ENCODE measurements at regions of chr3 and their contacts with region 1.

Region 1: DNA sequence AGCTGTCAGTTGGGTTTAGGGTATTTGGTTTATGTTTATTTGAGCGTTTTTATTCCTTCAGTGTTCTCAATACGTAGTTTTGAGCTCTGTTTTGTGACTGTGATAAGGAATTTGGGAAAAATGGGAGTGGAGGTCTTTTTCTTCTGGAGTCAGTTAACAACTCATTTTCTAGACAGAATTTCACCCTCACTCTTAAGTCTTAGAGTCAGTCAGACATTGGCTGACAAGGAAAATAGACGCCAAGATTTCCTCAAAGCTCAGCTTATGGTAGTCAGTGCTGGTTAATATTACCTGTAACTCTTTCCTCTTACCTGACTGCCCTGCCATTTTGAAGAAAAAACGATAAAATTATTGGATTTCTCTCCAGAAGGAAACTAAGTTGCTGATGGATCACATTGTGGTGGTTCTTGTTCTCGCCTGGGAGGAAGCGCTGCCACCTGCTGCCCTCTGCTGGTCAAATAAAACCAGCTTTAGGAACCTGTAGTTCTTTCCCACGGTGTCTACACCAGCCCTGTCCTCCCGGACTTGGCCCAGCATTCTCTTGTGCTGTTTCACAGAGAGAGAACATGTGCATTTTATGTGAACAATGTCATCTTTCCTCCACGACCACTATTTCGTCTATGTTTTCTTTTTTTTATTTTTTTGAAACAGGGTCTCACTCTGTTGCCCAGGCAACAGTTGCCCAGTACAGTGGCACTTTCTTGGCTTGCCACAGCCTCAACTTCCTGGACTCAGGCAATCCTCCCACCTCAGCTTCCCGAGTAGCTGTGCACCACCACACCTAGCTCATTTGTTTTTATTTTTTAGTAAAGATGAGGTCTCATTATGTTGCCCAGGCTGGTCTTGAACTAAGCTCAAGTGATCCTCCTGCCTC is 41.4 kb upstream of the UMPS start:
- DNase-seq: peak; percentile 69 to 78 (median 76)
- ATAC-seq: peak; percentile 40 to 89 (median 80)
- H3K4me3 ChIP-seq: no peak overlapping the region
- H3K27ac ChIP-seq: no peak overlapping the region
- H3K4me1 ChIP-seq: peaks cover 0 to 22% (median 6%) of the 10 kb centered on the region in 12 donors
- H3K27me3 ChIP-seq: no peaks in the 10 kb centered on the region
- CTCF ChIP-seq: peak; percentile 80 to 95 (median 86)
- POLR2A ChIP-seq: no peak

Region 2: GRCh38 chr3:124504332-124505059 is 184.3 kb before region 1 on chr3:
- intact Hi-C with region 1: no loop called
- DNase-seq: peak in 4 of 5 donors; percentile 19 to 64 (median 39)
- ATAC-seq: peak; percentile 72 to 94 (median 88)
- H3K4me3 ChIP-seq: no peak overlapping the region
- H3K27ac ChIP-seq: peak overlapping the region in 2 of 12 donors; percentile 1 to 54
- H3K4me1 ChIP-seq: peaks cover 0 to 14% (median 6%) of the 10 kb centered on the region in 12 donors
- H3K27me3 ChIP-seq: no peaks in the 10 kb centered on the region
- CTCF ChIP-seq: no peak
- POLR2A ChIP-seq: no peak

Region 3: DNA sequence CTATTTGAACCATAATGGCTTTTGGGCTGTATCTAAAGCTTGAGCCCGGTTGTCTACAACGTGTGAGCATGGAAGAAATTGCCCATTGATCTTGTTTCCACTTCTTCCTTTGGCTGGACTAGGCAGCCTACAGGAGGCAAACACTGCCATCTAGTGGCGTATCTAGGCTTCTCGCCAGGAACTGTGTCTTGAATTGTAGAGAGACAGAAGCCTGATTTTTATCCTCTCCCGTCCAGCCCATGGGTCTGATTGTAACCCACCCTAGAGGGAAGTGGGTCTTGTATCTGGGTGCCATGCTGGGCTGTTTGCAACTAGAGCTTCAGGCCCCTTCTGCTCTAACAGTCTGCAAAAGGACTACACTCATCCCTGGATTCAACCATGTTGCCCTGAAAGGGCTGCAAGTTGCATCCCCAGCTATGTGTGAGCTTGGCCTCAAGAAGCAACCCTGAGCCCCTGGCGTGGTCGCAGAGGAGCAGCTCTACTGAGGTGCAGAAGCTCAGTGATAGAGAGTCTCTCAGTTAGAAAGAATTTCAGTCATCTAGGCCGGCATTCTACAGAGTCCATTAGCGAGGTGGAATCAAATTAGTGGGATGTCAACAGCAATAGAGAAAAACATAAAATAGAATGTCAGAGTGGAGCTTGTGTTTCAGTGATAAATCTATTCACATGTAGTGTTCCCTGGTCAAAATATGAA is 128.8 kb before region 1 on chr3:
- intact Hi-C with region 1: loop called in 8 of 10 experiments (anchors 1 to 2 kb)
- DNase-seq: peak in 4 of 5 donors; percentile 50 to 69 (median 64)
- ATAC-seq: peak; percentile 57 to 79 (median 71)
- H3K4me3 ChIP-seq: no peak overlapping the region
- H3K27ac ChIP-seq: peak overlapping the region in 5 of 12 donors; percentile 17 to 41 (median 20)
- H3K4me1 ChIP-seq: peaks cover 4 to 38% (median 17%) of the 10 kb centered on the region in 12 donors
- H3K27me3 ChIP-seq: no peaks in the 10 kb centered on the region
- CTCF ChIP-seq: peak; percentile 80 to 94 (median 88)
- POLR2A ChIP-seq: no peak

Region 4: GRCh38 chr3:124567179-124567578 is 121.6 kb before region 1 on chr3:
- intact Hi-C with region 1: loop called (anchors 1 to 2 kb)
- DNase-seq: no peak
- ATAC-seq: no peak
- H3K4me3 ChIP-seq: no peak overlapping the region
- H3K27ac ChIP-seq: no peak overlapping the region
- H3K4me1 ChIP-seq: peaks cover 0 to 27% (median 13%) of the 10 kb centered on the region in 12 donors
- H3K27me3 ChIP-seq: no peaks in the 10 kb centered on the region
- CTCF ChIP-seq: no peak
- POLR2A ChIP-seq: no peak